ENCODE measurements at regions of chr9 and their contacts with region 1.

Region 1: GRCh38 chr9:75890472-75891276 is at the start of gene PCSK5:
- DNase-seq: peak; percentile 81 to 91 (median 84)
- H3K4me3 ChIP-seq: peak within 1 kb of the TSS; percentile 58 to 79
- H3K4me3 Mint-ChIP-seq: peak within 1 kb of the TSS; percentile 93 to 98 (median 94)
- H3K27ac ChIP-seq: peak within 1 kb of the TSS; percentile 59
- H3K27ac Mint-ChIP-seq: peak within 1 kb of the TSS; percentile 76 to 94 (median 93)
- H3K4me1 ChIP-seq: peaks cover 24% of the 10 kb centered on the region
- H3K4me1 Mint-ChIP-seq: peaks cover 22 to 51% (median 37%) of the 10 kb centered on the region in 4 donors
- H3K27me3 ChIP-seq: no peaks in the 10 kb centered on the region
- H3K27me3 Mint-ChIP-seq: peaks cover 2 to 7% of the 10 kb centered on the region in 2 donors
- total RNA-seq, gene PCSK5: 7.9 to 8.4 TPM

Region 2: GRCh38 chr9:76077537-76077936 is 186.9 kb after region 1 on chr9:
- CTCF ChIA-PET with region 1: no interaction called
- POLR2A ChIA-PET with region 1: no interaction called
- intact Hi-C with region 1: loop called (anchors 10 kb)
- DNase-seq: no peak
- H3K4me3 ChIP-seq: no peak overlapping the region
- H3K4me3 Mint-ChIP-seq: no peak overlapping the region
- H3K27ac ChIP-seq: no peak overlapping the region
- H3K27ac Mint-ChIP-seq: no peak overlapping the region
- H3K4me1 ChIP-seq: no peaks in the 10 kb centered on the region
- H3K4me1 Mint-ChIP-seq: peaks cover 0 to 5% (median 0%) of the 10 kb centered on the region in 4 donors
- H3K27me3 ChIP-seq: no peaks in the 10 kb centered on the region
- H3K27me3 Mint-ChIP-seq: no peaks in the 10 kb centered on the region

Measured in CD4-positive, alpha-beta memory T cell (primary cell).